Pancreas (tissue), 10 donors: ENCODE measurements at regions of chr4 and their contacts with region 1.

Region 1: GRCh38 chr4:69167300-69167699 is 47.2 kb downstream of the UGT2B11 start:
- DNase-seq: no peak
- ATAC-seq: peak in 3 of 4 donors; percentile 57 to 75 (median 71)
- H3K4me3 ChIP-seq: no peak overlapping the region
- H3K27ac ChIP-seq: peak overlapping the region in 2 of 4 donors; percentile 66 to 86
- H3K4me1 ChIP-seq: peaks cover 16 to 24% (median 20%) of the 10 kb centered on the region in 3 donors
- H3K27me3 ChIP-seq: no peaks in the 10 kb centered on the region
- CTCF ChIP-seq: no peak

Region 2: GRCh38 chr4:68871809-68872642 is 295.3 kb before region 1 on chr4:
- intact Hi-C with region 1: loop called in 1 of 3 experiments (anchors 10 kb)
- DNase-seq: no peak
- ATAC-seq: peak; percentile 76 to 84 (median 80)
- H3K4me3 ChIP-seq: no peak overlapping the region
- H3K27ac ChIP-seq: peak overlapping the region; percentile 29 to 87 (median 76)
- H3K4me1 ChIP-seq: peaks cover 12 to 56% (median 28%) of the 10 kb centered on the region in 3 donors
- H3K27me3 ChIP-seq: no peaks in the 10 kb centered on the region
- CTCF ChIP-seq: no peak

Region 3: GRCh38 chr4:69440308-69440707 is 273.0 kb after region 1 on chr4:
- intact Hi-C with region 1: no loop called
- DNase-seq: no peak
- ATAC-seq: peak in 1 of 4 donors; percentile 17
- H3K4me3 ChIP-seq: no peak overlapping the region
- H3K27ac ChIP-seq: no peak overlapping the region
- H3K4me1 ChIP-seq: no peaks in the 10 kb centered on the region
- H3K27me3 ChIP-seq: no peaks in the 10 kb centered on the region
- CTCF ChIP-seq: no peak